ENCODE measurements at regions of chr2 and their contacts with region 1.

Region 1: GRCh38 chr2:85215448-85216401 is 82.5 kb downstream of the TCF7L1 start:
- DNase-seq: peak in 1 of 2 donors; percentile 86
- H3K4me3 ChIP-seq: no peak overlapping the region
- CTCF ChIP-seq: no peak
- POLR2A ChIP-seq: no peak

Region 2: GRCh38 chr2:85181134-85181631 is 34.5 kb before region 1 on chr2:
- intact Hi-C with region 1: loop called (anchors 2 kb)
- DNase-seq: peak in 1 of 2 donors; percentile 40
- H3K4me3 ChIP-seq: no peak overlapping the region
- CTCF ChIP-seq: no peak
- POLR2A ChIP-seq: no peak